Left ventricle myocardium inferior (tissue), 1 donor: ENCODE measurements at regions of chr14 and their contacts with region 1.

Region 1: GRCh38 chr14:36553656-36554260 is 28.7 kb downstream of the NKX2-8 start:
- DNase-seq: no peak
- H3K4me3 ChIP-seq: no peak overlapping the region
- H3K27ac ChIP-seq: no peak overlapping the region
- H3K4me1 ChIP-seq: no peaks in the 10 kb centered on the region
- H3K27me3 ChIP-seq: peaks cover 52% of the 10 kb centered on the region
- CTCF ChIP-seq: peak; percentile 73

Region 2: GRCh38 chr14:37142835-37143401 is 589.2 kb after region 1 on chr14:
- intact Hi-C with region 1: loop called (anchors 10 kb)
- DNase-seq: no peak
- H3K4me3 ChIP-seq: no peak overlapping the region
- H3K27ac ChIP-seq: no peak overlapping the region
- H3K4me1 ChIP-seq: no peaks in the 10 kb centered on the region
- H3K27me3 ChIP-seq: peaks cover 7% of the 10 kb centered on the region
- CTCF ChIP-seq: no peak